Adrenal gland (tissue), 19 donors: ENCODE measurements at regions of chr7 and their contacts with region 1.

Region 1: GRCh38 chr7:15011289-15011688 is 108.7 kb upstream of the DGKB start:
- DNase-seq: no peak
- H3K4me3 ChIP-seq: no peak overlapping the region
- H3K27ac ChIP-seq: no peak overlapping the region
- H3K4me1 ChIP-seq: no peaks in the 10 kb centered on the region
- H3K27me3 ChIP-seq: no peaks in the 10 kb centered on the region
- CTCF ChIP-seq: no peak
- POLR2A ChIP-seq: no peak

Region 2: DNA sequence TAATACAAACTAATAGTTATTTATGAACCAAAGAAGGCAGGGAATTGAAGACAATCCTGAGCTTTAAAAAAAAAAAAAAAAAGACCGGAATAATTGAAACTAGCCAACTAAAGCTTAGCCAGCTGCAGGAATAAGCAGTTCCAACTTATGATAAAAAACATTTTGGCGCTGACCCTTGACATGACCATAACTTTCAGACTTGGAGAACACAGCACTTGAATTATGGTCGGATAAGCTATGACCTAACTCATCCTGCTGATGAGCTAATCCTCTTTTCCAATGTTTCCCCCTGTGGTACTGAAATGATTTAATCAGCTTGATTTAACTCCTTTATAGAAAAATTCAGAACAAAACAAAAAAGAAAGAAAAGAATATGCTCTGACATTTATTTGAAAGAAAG is 290.5 kb before region 1 on chr7:
- intact Hi-C with region 1: loop called in 1 of 2 experiments (anchors 5 kb)
- DNase-seq: no peak
- H3K4me3 ChIP-seq: no peak overlapping the region
- H3K27ac ChIP-seq: no peak overlapping the region
- H3K4me1 ChIP-seq: no peaks in the 10 kb centered on the region
- H3K27me3 ChIP-seq: no peaks in the 10 kb centered on the region
- CTCF ChIP-seq: no peak
- POLR2A ChIP-seq: no peak